Motor neuron (in vitro differentiated cells): ENCODE measurements at regions of chr18 and their contacts with region 1.

Region 1: DNA sequence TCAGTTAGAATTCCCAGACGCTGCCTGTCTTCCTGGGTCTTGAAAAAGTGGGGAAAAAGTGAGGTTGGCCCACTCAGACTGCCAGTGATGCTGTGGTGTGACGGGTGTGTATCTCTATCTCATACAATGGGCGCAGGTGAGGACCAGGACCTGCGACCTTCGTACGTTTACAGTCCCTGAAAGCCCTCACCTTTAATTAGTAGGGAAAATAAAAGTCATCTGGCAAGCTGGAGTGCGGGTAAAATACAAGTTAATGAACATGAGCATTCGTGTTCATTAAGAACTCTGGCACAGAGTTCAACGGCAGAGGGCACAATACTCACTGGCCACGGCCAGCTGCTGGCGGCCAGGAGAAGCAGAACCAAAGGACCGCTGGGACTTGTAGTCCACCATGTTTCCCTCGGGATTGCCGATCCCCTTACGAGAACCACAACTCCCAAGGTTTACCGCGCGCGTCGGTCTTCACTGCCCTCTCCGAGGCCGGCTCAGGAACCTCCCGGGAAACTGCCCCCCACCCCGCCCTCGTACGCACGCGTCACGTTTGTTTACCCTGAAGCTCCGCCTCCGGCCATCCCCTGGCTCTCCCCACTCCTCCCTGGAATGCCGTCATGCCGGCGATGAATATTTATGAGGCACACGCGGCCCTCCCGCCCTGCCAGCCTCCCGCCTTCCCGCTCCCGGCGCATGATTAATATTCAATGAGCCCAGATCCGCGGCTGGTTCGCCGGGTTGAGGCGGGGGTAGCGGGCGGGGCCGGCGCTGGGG is 488 bp upstream of the PHLPP1 start:
- ATAC-seq: peak; percentile 81 to 90 (median 88)
- H3K4me3 ChIP-seq: peak overlapping the region; percentile 52 to 65 (median 59)
- H3K27ac ChIP-seq: peak overlapping the region; percentile 87 to 88
- H3K4me1 ChIP-seq: peaks cover 4 to 5% of the 10 kb centered on the region in 2 donors

Region 2: DNA sequence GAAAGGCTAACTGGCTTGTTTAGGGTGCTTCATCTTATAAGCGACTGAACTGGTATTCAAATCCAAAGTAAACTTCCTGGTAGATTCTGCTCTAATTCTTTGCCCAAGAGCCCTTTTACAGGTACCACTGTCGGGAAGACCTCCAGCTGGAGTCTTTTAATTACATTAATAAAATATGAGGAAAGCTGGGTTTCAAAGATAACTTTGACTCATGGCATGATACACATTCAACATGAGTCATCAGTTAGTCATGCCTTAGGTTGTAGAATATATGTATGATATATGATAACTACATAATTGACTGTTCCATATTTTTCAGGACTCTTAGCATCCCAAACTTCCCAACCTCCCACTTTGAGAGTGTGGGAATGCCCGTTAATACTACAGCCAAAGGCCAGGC is 159.7 kb before region 1 on chr18:
- in situ Hi-C with region 1: no loop called
- ATAC-seq: peak in 2 of 8 experiments; percentile 24 to 51
- H3K4me3 ChIP-seq: no peak overlapping the region
- H3K27ac ChIP-seq: no peak overlapping the region
- H3K4me1 ChIP-seq: no peaks in the 10 kb centered on the region

Region 3: GRCh38 chr18:62957885-62958472 is 243.1 kb after region 1 on chr18:
- in situ Hi-C with region 1: loop called in 2 of 9 experiments (anchors 25 kb)
- ATAC-seq: peak in 3 of 8 experiments; percentile 73 to 81 (median 80)
- H3K4me3 ChIP-seq: no peak overlapping the region
- H3K27ac ChIP-seq: no peak overlapping the region
- H3K4me1 ChIP-seq: peaks cover 5 to 7% of the 10 kb centered on the region in 2 donors